Ovary (tissue), 10 donors: ENCODE measurements at regions of chr9 and their contacts with region 1.

Region 1: GRCh38 chr9:98860871-98861293 is 53.4 kb downstream of the GALNT12 start:
- DNase-seq: peak; percentile 45 to 71 (median 64)
- H3K4me3 ChIP-seq: no peak overlapping the region
- H3K27ac ChIP-seq: no peak overlapping the region
- H3K4me1 ChIP-seq: peaks cover 2% of the 10 kb centered on the region
- H3K27me3 ChIP-seq: no peaks in the 10 kb centered on the region
- CTCF ChIP-seq: peak; percentile 30 to 58 (median 52)
- EP300 ChIP-seq: no peak
- POLR2A ChIP-seq: no peak

Region 2: DNA sequence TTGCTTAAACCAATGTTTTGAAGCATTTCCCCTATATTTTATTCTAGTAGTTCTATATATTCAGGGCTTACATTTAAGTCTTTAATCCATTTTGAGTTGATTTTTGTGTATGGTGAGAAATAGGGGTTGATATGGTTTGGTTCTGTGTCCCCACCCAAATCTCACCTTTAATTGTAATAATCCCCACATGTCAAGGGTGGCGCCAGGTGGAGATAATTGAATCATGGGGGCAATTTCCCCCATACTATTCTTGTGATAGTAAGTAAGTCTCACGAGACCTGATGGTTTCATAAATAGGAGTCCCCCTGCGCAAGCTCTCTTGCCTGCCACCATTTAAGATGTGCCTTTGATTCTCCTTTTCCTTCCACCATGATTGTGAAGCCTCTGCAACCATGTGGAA is 513.2 kb before region 1 on chr9:
- intact Hi-C with region 1: no loop called
- DNase-seq: no peak
- H3K4me3 ChIP-seq: no peak overlapping the region
- H3K27ac ChIP-seq: no peak overlapping the region
- H3K4me1 ChIP-seq: no peaks in the 10 kb centered on the region
- H3K27me3 ChIP-seq: no peaks in the 10 kb centered on the region
- CTCF ChIP-seq: no peak
- EP300 ChIP-seq: no peak
- POLR2A ChIP-seq: no peak

Region 3: DNA sequence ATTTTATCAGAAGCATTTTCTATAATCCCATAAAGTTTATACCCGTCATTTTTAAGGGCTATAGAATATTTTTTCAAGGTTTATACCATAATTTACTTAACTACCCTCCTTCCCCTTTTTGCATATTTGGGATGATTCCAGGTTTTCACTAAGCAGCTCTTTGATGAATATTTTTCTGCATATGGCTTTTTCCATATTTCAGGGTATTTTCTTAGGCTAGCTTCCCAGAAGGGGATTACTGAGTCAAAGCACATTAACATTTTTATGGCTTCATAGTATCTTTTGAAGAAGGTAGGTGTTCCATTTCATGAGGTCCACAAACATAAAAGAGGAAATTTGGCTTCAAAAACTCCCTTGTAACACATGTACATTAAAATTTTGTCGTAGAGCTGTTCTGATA is 68.2 kb after region 1 on chr9:
- intact Hi-C with region 1: loop called in 1 of 4 experiments (anchors 10 kb)
- DNase-seq: no peak
- H3K4me3 ChIP-seq: no peak overlapping the region
- H3K27ac ChIP-seq: peak overlapping the region in 1 of 2 donors; percentile 72
- H3K4me1 ChIP-seq: peaks cover 8% of the 10 kb centered on the region
- H3K27me3 ChIP-seq: no peaks in the 10 kb centered on the region
- CTCF ChIP-seq: no peak
- EP300 ChIP-seq: no peak
- POLR2A ChIP-seq: no peak

Region 4: DNA sequence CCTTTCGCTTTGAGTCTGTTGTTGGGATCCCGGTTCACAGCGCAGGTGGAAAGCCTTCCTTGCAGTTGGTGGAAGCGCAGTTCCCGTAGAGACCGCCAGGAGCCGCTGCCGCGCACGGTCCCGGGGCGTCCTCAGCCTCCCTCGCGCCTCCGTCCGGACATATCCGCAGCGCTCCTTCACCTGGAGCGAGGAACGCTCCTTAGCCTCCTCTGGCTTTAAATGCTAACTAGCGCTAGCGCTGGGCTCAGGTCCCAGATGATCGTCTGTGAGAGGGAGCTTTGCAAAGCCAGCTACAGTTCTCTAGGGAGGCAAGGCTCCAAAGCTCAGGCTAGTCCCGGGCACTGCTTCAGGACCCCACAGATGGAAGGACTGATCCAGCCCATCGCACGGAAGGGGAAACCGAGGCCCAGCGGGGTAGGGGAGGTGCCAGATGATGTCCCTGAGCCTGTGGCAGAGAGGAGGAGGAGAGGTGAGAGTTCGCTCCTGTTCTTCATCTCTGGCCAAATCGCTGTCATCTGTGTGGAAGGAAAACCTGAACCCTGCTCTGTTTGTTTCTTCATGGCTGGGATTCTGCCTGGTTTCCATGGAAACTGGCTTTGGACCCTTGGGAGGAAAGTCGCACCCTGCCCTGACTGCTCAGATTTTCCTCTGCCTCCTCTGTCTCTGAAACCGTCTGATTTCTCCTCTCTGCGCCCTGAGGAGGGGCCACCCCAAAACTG is 114.3 kb after region 1 on chr9:
- intact Hi-C with region 1: loop called in 2 of 4 experiments (anchors 5 to 10 kb)
- DNase-seq: peak; percentile 80 to 93 (median 89)
- H3K4me3 ChIP-seq: peak overlapping the region; percentile 19
- H3K27ac ChIP-seq: no peak overlapping the region
- H3K4me1 ChIP-seq: peaks cover 6% of the 10 kb centered on the region
- H3K27me3 ChIP-seq: no peaks in the 10 kb centered on the region
- CTCF ChIP-seq: peak; percentile 95 to 97 (median 96)
- EP300 ChIP-seq: no peak
- POLR2A ChIP-seq: no peak

Region 5: DNA sequence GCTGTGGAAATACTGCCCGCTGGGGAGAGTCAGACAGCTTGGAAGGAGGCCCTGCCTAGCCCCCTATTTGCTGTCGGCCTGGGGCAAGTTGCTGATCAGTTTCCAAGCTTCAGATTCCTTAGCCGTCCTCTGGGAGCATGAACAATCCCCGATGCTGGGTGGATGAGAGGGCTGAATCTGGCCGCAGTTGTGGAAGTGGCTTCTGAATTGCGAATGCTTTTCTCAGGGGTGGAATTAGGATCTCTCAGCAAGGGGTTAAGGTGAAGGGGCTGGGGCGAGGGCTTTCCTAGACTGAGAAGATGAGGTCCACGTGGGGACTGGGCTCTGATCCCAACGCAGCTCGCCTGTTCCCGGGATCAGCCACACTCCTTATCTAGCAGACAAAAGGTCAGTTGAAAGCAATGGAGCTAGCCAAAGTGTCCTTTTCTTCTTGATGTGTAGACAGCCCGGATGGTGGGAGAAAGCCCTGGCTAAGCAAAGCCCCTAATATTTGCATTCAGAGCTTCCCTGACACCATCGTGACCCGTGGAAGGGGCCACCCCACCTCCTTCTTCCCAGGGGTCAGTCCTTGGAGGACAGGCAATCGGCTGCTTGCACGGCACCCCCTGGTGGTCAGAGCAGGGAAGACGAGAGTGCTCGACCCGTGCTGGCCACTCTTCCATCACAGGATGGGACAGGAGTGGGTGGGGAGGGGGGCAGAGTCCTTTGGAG is 137.7 kb after region 1 on chr9:
- intact Hi-C with region 1: loop called in 2 of 4 experiments (anchors 5 kb)
- DNase-seq: peak; percentile 75 to 88 (median 85)
- H3K4me3 ChIP-seq: no peak overlapping the region
- H3K27ac ChIP-seq: peak overlapping the region in 1 of 2 donors; percentile 26
- H3K4me1 ChIP-seq: peaks cover 17% of the 10 kb centered on the region
- H3K27me3 ChIP-seq: no peaks in the 10 kb centered on the region
- CTCF ChIP-seq: peak; percentile 58 to 88 (median 82)
- EP300 ChIP-seq: no peak
- POLR2A ChIP-seq: no peak